ENCODE measurements at regions of chr9 and their contacts with region 1.

Region 1: DNA sequence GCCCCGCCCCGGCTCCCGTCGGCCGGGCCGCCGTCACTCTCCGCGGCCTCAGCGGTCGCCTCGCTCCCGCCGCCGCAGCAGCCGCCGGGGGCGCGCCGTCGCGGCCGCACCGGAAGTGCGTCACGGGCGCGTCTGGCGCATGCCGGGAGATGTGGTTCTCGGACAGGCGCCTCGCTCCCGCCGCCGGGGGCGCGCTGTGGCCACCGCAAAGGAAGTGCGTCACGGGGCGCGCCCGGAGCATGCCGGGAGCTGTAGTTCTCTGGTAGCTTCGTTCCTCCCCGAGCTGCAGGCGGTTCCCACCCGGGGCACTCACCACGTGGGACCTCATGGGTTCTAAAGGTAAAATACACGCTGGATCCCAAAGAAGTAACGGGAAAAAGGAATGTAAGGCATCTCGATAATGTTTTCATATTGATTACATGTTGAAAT is at the start of gene UBAC1:
- DNase-seq: peak; percentile 88 to 98 (median 95)
- ATAC-seq: peak; percentile 88
- H3K4me3 ChIP-seq: peak within 1 kb of the TSS; percentile 73 to 76
- H3K4me3 Mint-ChIP-seq: peak within 1 kb of the TSS; percentile 88
- H3K27ac ChIP-seq: peak within 1 kb of the TSS; percentile 39 to 45
- H3K27ac Mint-ChIP-seq: peak within 1 kb of the TSS; percentile 82
- H3K4me1 ChIP-seq: peaks cover 15% of the 10 kb centered on the region
- H3K4me1 Mint-ChIP-seq: peaks cover 31% of the 10 kb centered on the region
- H3K27me3 ChIP-seq: no peaks in the 10 kb centered on the region
- H3K27me3 Mint-ChIP-seq: no peaks in the 10 kb centered on the region
- CTCF ChIP-seq: peak; percentile 26
- total RNA-seq, gene UBAC1: 18.5 to 22.0 TPM

Region 2: GRCh38 chr9:134067904-134068743 is 1893.2 kb before region 1 on chr9 and contains the start of gene BRD3:
- CTCF ChIA-PET with region 1: no interaction called
- POLR2A ChIA-PET with region 1: no interaction called
- intact Hi-C with region 1: loop called in 1 of 2 experiments (anchors 5 kb)
- DNase-seq: peak; percentile 60 to 95 (median 80)
- ATAC-seq: peak; percentile 77
- H3K4me3 ChIP-seq: peak within 1 kb of the TSS; percentile 74 to 89
- H3K4me3 Mint-ChIP-seq: peak within 1 kb of the TSS; percentile 87
- H3K27ac ChIP-seq: peak within 1 kb of the TSS; percentile 87 to 90
- H3K27ac Mint-ChIP-seq: peak within 1 kb of the TSS; percentile 96
- H3K4me1 ChIP-seq: peaks cover 12% of the 10 kb centered on the region
- H3K4me1 Mint-ChIP-seq: peaks cover 32% of the 10 kb centered on the region
- H3K27me3 ChIP-seq: peaks cover 4% of the 10 kb centered on the region in 2 experiments
- H3K27me3 Mint-ChIP-seq: peaks cover 21% of the 10 kb centered on the region
- CTCF ChIP-seq: no peak
- total RNA-seq, gene BRD3: 34.3 to 41.4 TPM

Region 3: GRCh38 chr9:135864447-135865049 is 96.7 kb before region 1 on chr9:
- CTCF ChIA-PET with region 1: interaction called, 4 read pairs
- POLR2A ChIA-PET with region 1: interaction called, 3 read pairs
- intact Hi-C with region 1: loop called (anchors 2 kb)
- DNase-seq: peak; percentile 52 to 82 (median 65)
- ATAC-seq: peak; percentile 66
- H3K4me3 ChIP-seq: no peak overlapping the region
- H3K4me3 Mint-ChIP-seq: no peak overlapping the region
- H3K27ac ChIP-seq: no peak overlapping the region
- H3K27ac Mint-ChIP-seq: peak overlapping the region; percentile 32
- H3K4me1 ChIP-seq: no peaks in the 10 kb centered on the region
- H3K4me1 Mint-ChIP-seq: peaks cover 17% of the 10 kb centered on the region
- H3K27me3 ChIP-seq: no peaks in the 10 kb centered on the region
- H3K27me3 Mint-ChIP-seq: no peaks in the 10 kb centered on the region
- CTCF ChIP-seq: peak; percentile 87

Region 4: GRCh38 chr9:135978642-135979546 is 17.6 kb after region 1 on chr9:
- CTCF ChIA-PET with region 1: interaction called, 3 read pairs
- POLR2A ChIA-PET with region 1: no interaction called
- intact Hi-C with region 1: loop called in 1 of 2 experiments (anchors 2 kb)
- DNase-seq: peak; percentile 46 to 83 (median 68)
- ATAC-seq: peak; percentile 94
- H3K4me3 ChIP-seq: peak overlapping the region in 1 of 2 experiments; percentile 14
- H3K4me3 Mint-ChIP-seq: peak overlapping the region; percentile 67
- H3K27ac ChIP-seq: no peak overlapping the region
- H3K27ac Mint-ChIP-seq: no peak overlapping the region
- H3K4me1 ChIP-seq: peaks cover 25% of the 10 kb centered on the region
- H3K4me1 Mint-ChIP-seq: peaks cover 14% of the 10 kb centered on the region
- H3K27me3 ChIP-seq: peaks cover 0 to 2% of the 10 kb centered on the region in 2 experiments
- H3K27me3 Mint-ChIP-seq: no peaks in the 10 kb centered on the region
- CTCF ChIP-seq: no peak

Region 5: DNA sequence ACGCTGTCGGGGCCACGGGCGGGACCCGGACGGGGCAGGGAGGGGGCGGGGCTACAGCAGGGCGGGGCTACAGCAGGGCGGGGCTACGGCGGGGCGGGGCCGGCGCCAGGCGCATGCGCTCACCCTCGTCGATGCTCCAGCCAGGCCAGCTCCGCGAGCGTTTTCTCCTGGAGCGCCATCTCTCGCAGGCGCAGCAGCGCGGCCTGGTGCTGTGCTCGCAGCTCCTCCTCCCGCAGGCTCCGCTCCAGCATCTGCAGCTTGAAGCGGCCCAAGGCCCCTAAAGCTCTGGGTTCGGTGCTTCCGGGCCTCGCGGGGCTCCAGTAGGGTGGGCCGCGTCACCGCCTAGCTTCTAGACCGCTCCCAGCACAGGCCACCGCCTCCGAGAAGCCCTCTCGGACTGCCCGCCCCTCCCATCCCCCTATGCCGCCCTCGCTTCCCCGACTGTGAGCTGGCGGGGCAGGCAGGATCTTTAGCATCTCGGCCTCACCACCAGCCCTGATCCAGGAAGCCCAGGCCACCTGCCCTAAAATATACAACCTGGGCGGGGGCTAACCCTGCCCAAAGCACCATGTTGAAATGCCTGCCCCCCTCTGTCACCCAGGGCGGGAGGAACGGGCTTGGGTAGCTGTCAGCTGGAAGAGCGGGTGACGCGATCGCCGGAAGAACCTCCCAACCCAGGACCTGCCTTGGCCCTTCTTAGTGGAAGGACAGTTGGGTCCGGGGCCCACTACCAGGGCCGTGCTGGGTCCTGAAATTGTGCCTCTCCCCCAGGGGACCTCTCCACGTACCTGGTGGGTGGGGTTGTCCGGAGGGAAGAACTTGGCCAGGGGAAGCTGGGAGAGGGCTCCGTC is 306.2 kb after region 1 on chr9:
- CTCF ChIA-PET with region 1: no interaction called
- POLR2A ChIA-PET with region 1: no interaction called
- intact Hi-C with region 1: loop called in 1 of 2 experiments (anchors 5 kb)
- DNase-seq: peak; percentile 74 to 94 (median 85)
- ATAC-seq: peak; percentile 98
- H3K4me3 ChIP-seq: peak overlapping the region; percentile 74 to 80
- H3K4me3 Mint-ChIP-seq: peak overlapping the region; percentile 81
- H3K27ac ChIP-seq: peak overlapping the region; percentile 51 to 58
- H3K27ac Mint-ChIP-seq: peak overlapping the region; percentile 58
- H3K4me1 ChIP-seq: peaks cover 6% of the 10 kb centered on the region
- H3K4me1 Mint-ChIP-seq: peaks cover 6% of the 10 kb centered on the region
- H3K27me3 ChIP-seq: peaks cover 0 to 2% of the 10 kb centered on the region in 2 experiments
- H3K27me3 Mint-ChIP-seq: no peaks in the 10 kb centered on the region
- CTCF ChIP-seq: peak; percentile 18

Region 6: GRCh38 chr9:137423004-137423874 is 1461.9 kb after region 1 on chr9 and contains the starts of genes EXD3 and NOXA1:
- CTCF ChIA-PET with region 1: no interaction called
- POLR2A ChIA-PET with region 1: no interaction called
- intact Hi-C with region 1: loop called in 1 of 2 experiments (anchors 5 kb)
- DNase-seq: peak; percentile 91 to 98 (median 94)
- ATAC-seq: peak; percentile 93
- H3K4me3 ChIP-seq: peak within 1 kb of the TSS; percentile 60 to 72
- H3K4me3 Mint-ChIP-seq: peak within 1 kb of the TSS; percentile 83
- H3K27ac ChIP-seq: peak within 1 kb of the TSS in 1 of 2 experiments; percentile 50
- H3K27ac Mint-ChIP-seq: no peak within 1 kb of the TSS
- H3K4me1 ChIP-seq: peaks cover 17% of the 10 kb centered on the region
- H3K4me1 Mint-ChIP-seq: peaks cover 20% of the 10 kb centered on the region
- H3K27me3 ChIP-seq: no peaks in the 10 kb centered on the region
- H3K27me3 Mint-ChIP-seq: no peaks in the 10 kb centered on the region
- CTCF ChIP-seq: peak; percentile 46
- total RNA-seq, gene EXD3: 9.1 to 11.0 TPM
- total RNA-seq, gene NOXA1: 2.4 to 2.7 TPM